Endothelial cell of umbilical vein (primary cell): ENCODE measurements at regions of chr7 and their contacts with region 1.

Region 1: DNA sequence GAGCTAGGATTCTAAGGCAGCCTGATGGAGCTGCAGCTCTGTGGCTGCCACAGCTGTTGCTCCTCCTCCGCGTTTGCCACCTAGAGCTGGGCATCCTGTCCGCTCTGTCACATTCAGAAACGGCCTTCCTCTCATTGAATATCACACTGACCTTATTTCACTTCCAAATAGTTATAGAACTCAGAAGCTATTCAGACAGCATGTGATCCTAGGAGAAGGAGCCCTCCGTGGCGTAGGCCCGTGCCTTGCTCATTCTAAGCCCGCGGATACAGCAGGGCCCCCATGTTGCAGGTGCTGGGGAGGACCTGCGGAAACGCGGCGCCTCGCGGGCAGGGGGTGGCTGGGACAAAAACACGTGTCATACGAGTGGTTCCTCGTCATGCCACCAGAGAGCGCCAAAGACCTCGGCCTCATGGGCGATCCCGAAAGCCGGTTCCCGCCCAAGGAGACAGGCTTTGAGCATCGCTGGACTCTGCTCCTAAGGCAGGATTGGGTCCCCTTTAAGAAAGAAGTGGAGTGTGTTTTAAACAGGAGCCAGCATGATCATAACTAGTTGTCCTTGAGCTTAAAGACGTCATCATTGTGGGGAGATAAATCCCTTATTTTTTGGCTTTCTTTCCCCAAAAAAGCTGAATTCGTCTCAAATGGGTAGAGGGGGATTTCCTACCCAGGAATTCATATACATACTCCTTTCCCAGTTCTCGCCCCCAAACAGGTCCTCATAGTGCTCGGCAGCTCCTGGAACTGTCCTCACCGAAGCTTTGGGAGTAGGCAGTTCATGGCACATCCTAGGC is 17.9 kb upstream of the FIGNL1 start:
- DNase-seq: peak; percentile 80
- H3K4me3 ChIP-seq: no peak overlapping the region
- H3K27ac ChIP-seq: no peak overlapping the region
- H3K4me1 ChIP-seq: peaks cover 4% of the 10 kb centered on the region
- H3K27me3 ChIP-seq: no peaks in the 10 kb centered on the region
- CTCF ChIP-seq: peak; percentile 82 to 90
- POLR2A ChIP-seq: no peak

Region 2: GRCh38 chr7:50497068-50497642 is 29.1 kb after region 1 on chr7:
- CTCF ChIA-PET with region 1: interaction called, 24 read pairs
- POLR2A ChIA-PET with region 1: no interaction called
- dilution Hi-C with region 1: no loop called
- intact Hi-C with region 1: loop called (anchors 2 kb)
- DNase-seq: peak; percentile 99
- H3K4me3 ChIP-seq: peak overlapping the region in 1 of 3 experiments; percentile 4
- H3K27ac ChIP-seq: peak overlapping the region; percentile 99
- H3K4me1 ChIP-seq: peaks cover 40% of the 10 kb centered on the region
- H3K27me3 ChIP-seq: no peaks in the 10 kb centered on the region
- CTCF ChIP-seq: no peak
- POLR2A ChIP-seq: peak; percentile 67

Region 3: DNA sequence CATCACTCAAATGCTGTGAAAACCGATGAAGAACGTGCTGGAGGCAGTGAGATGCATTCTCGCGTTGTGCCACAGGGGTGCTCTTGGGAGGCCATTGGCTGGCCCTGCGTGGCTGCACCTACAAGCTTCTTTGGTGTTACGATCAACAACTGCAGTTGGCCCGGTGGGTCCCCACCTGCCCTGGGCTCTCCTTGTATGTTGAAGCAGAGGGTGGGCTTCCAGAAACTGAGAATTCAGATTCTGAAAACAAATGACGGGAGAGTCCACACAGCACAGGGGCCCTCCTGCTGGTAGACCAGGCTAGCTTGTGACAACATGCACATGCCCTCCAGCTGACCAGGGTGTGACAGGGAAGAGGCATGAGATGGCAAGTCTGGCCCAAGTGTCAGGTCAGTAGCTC is 120.9 kb after region 1 on chr7:
- CTCF ChIA-PET with region 1: interaction called, 22 read pairs
- POLR2A ChIA-PET with region 1: no interaction called
- dilution Hi-C with region 1: no loop called
- intact Hi-C with region 1: loop called (anchors 2 kb)
- DNase-seq: no peak
- H3K4me3 ChIP-seq: no peak overlapping the region
- H3K27ac ChIP-seq: no peak overlapping the region
- H3K4me1 ChIP-seq: no peaks in the 10 kb centered on the region
- H3K27me3 ChIP-seq: no peaks in the 10 kb centered on the region
- CTCF ChIP-seq: peak; percentile 9 to 22
- POLR2A ChIP-seq: no peak

Region 4: DNA sequence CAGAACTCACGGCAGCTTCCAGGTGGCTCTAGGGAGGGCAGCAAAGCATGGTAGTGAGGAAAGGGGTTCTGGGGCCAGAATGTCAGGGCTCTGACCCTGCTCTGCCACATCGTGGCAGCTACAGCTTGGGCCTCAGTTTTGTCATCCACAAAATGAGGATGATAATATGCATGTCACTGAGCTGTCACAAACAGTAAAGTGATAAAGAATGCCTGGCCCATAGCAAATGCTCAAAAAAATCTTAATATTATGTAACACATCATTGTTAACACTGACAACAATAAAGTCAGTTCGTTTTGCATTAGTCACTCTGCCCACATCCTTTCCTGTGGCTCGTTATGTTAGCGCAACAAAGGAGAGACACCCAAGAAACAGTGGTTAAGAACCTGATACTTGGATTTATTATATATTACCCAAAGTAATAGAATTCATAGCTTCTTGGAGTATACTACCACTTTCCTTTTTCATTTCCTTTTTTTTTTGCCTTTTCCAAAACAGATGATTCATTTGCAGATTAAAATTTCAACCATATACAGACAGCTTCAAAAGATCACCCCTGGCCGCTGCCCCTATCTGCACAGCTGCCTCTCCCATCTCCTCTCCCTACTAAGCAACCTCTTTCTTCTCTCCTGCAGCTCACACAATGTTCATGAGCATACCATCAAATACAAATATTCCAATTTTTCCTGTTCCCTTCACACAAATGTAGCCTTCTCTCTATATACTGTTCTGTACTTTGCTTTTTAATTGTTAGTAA is 142.7 kb after region 1 on chr7:
- CTCF ChIA-PET with region 1: interaction called, 11 read pairs
- POLR2A ChIA-PET with region 1: no interaction called
- dilution Hi-C with region 1: no loop called
- intact Hi-C with region 1: loop called (anchors 5 kb)
- DNase-seq: peak; percentile 52
- H3K4me3 ChIP-seq: no peak overlapping the region
- H3K27ac ChIP-seq: peak overlapping the region; percentile 38
- H3K4me1 ChIP-seq: peaks cover 23% of the 10 kb centered on the region
- H3K27me3 ChIP-seq: no peaks in the 10 kb centered on the region
- CTCF ChIP-seq: no peak
- POLR2A ChIP-seq: no peak

Region 5: GRCh38 chr7:50679218-50680007 is 211.4 kb after region 1 on chr7:
- CTCF ChIA-PET with region 1: interaction called, 13 read pairs
- POLR2A ChIA-PET with region 1: no interaction called
- dilution Hi-C with region 1: no loop called
- intact Hi-C with region 1: loop called (anchors 1 kb)
- DNase-seq: peak; percentile 41
- H3K4me3 ChIP-seq: no peak overlapping the region
- H3K27ac ChIP-seq: no peak overlapping the region
- H3K4me1 ChIP-seq: peaks cover 15% of the 10 kb centered on the region
- H3K27me3 ChIP-seq: no peaks in the 10 kb centered on the region
- CTCF ChIP-seq: peak in 1 of 2 donors; percentile 5
- POLR2A ChIP-seq: no peak

Region 6: GRCh38 chr7:51162724-51163329 is 694.8 kb after region 1 on chr7:
- CTCF ChIA-PET with region 1: interaction called, 117 read pairs
- POLR2A ChIA-PET with region 1: no interaction called
- dilution Hi-C with region 1: no loop called
- intact Hi-C with region 1: loop called (anchors 1 kb)
- DNase-seq: peak; percentile 85
- H3K4me3 ChIP-seq: no peak overlapping the region
- H3K27ac ChIP-seq: no peak overlapping the region
- H3K4me1 ChIP-seq: no peaks in the 10 kb centered on the region
- H3K27me3 ChIP-seq: peaks cover 0 to 16% of the 10 kb centered on the region in 2 experiments
- CTCF ChIP-seq: peak; percentile 83
- POLR2A ChIP-seq: no peak